ENCODE measurements at regions of chr16 and their contacts with region 1.

Region 1: DNA sequence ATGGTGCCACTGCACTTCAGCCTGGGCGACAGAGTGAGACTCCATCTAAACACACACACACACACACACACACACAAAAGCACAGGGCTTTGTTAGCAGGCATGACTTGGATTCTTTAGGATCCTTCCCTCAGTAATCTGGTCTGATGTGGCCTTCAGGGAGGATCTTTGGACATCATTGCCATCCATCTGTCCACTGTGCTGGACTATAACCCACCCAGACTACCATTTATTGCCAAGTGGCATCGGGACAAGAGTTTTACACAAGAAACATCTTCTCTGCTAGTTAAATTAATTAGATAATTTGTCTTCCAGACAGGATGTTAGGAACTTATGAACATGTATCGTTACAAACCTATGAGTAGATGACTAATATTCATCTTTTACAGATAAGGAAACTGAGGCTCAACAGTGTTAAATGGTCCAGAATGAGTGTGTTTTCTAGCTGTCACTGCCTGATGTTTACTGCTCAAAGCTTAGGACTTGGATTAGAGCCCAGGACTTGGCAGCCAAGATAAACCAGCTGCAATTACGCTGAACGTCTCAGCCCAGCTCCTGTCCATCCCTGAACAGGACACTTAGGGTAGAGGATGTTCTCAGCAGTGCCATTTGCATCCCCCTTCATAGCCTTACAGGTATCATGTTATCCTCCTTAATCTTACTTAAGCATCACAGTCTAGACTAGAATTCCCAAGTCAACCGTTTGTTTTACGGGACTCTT is 285.8 kb downstream of the WWOX start:
- DNase-seq: no peak
- ATAC-seq: peak in 3 of 4 donors; percentile 25 to 45 (median 28)
- H3K4me3 ChIP-seq: no peak overlapping the region
- H3K27ac ChIP-seq: no peak overlapping the region
- H3K4me1 ChIP-seq: peaks cover 0 to 23% (median 8%) of the 10 kb centered on the region in 12 donors
- H3K27me3 ChIP-seq: no peaks in the 10 kb centered on the region
- CTCF ChIP-seq: no peak
- POLR2A ChIP-seq: no peak

Region 2: GRCh38 chr16:78331731-78332130 is 53.5 kb before region 1 on chr16:
- intact Hi-C with region 1: loop called in 1 of 10 experiments (anchors 10 kb)
- DNase-seq: no peak
- ATAC-seq: no peak
- H3K4me3 ChIP-seq: no peak overlapping the region
- H3K27ac ChIP-seq: no peak overlapping the region
- H3K4me1 ChIP-seq: no peaks in the 10 kb centered on the region
- H3K27me3 ChIP-seq: no peaks in the 10 kb centered on the region
- CTCF ChIP-seq: no peak
- POLR2A ChIP-seq: no peak

Measured in heart left ventricle (tissue), 16 donors.